ENCODE measurements at regions of chr9 and their contacts with region 1.

Region 1: DNA sequence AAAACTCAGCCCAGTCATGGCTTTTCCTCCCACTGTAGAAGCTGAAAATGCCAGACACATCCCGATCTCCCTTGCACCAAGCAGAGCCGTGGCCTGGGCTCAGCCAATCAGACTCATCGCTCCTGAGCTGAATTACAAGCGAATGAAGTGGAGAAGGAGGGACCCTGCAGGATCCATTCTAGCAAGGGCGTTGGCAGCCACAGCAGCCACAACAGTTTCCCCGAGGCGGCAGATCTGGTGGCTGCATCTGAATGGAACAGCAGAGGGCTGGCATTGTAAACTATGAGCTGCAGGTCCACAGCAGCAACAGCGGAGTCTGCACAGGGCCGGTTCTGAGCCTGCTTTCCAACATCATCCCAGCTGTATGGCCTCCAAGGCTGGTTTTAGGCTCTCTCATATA is 23.8 kb downstream of the ALG2 start:
- DNase-seq: no peak

Region 2: DNA sequence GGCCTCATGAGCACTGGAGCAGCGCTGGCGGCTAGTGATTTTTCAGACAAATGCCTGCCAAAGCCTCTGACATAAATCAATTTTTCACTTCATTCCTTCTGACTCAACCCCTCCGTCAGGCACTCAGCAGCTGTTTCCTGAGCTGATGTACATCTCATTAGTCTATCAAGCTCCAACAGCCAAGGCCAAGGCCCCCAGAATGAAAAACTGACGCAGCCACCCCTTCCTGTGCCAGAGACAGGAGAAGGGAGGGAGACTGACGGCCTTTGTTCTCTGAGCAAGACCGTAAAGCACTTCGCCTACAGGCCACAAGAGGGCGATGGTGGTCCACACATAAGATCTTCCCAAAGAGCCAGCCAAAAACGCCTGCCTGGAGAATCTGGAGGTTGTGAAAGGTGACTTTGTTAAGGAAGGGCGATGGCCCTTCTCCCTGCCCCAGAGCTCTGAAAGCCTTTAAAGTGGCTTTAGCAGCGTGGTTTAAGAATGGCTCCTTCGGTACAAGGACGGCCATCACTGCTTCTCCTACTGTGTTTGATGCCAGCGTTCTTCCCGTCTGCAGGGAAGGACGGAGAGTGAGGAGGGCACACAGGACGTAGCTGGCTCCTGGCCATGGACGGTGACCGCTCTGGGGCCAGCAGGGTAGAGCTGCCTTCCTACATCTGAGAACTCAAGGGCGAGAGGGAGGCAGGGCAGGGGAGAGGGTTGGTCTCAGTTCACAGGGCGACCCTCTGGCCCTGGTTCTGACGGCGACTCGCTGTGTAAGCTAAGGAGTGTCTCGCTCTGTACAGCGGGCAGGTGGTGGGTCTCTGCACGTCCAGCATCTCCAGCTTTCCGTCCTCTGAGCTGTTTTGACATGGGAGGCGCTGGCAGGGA is 13.3 kb before region 1 on chr9:
- CTCF ChIA-PET with region 1: interaction called, 14 read pairs
- POLR2A ChIA-PET with region 1: no interaction called
- DNase-seq: peak; percentile 81